CD4-positive, alpha-beta memory T cell (primary cell): ENCODE measurements at regions of chr1 and their contacts with region 1.

Region 1: GRCh38 chr1:203216274-203217138 is 13.0 kb downstream of the CHIT1 start:
- DNase-seq: peak; percentile 48 to 56 (median 50)
- H3K4me3 ChIP-seq: no peak overlapping the region
- H3K4me3 Mint-ChIP-seq: peak overlapping the region in 1 of 8 donors; percentile 18
- H3K27ac ChIP-seq: no peak overlapping the region
- H3K27ac Mint-ChIP-seq: peak overlapping the region in 2 of 7 donors; percentile 54 to 60
- H3K4me1 ChIP-seq: no peaks in the 10 kb centered on the region
- H3K4me1 Mint-ChIP-seq: peaks cover 0 to 9% (median 5%) of the 10 kb centered on the region in 4 donors
- H3K27me3 ChIP-seq: no peaks in the 10 kb centered on the region
- H3K27me3 Mint-ChIP-seq: peaks cover 8 to 10% of the 10 kb centered on the region in 2 donors

Region 2: DNA sequence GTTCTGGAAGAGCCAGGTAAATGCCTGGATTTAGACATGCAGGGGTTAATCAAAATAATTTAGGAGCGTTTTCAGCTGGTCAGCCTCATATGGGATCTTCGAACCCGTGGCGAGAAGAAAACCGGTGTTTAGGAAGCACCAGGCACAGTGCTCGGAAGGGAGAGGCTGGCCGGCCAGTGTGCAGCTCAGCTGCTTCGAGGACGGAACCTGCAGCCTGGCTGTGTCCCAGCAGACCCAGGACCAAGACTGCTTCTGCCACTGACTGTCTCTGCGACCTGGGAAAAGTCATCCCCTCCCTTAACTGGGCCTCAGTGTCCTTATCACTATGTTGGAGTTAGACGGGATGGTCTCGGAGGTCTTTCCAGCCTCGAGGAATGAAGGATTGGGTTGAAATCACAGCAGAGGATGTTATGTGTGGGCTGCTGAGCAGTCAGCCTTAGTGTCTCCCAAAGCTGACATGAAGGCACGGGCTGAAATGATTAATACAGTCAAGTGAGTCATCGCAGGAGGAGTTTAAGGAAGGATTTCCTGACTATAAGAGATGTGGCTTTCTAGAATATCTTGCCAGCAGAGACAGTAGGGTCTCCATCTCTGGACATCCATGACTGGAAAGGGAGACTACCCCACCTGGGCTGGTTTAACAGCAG is 169.4 kb before region 1 on chr1:
- CTCF ChIA-PET with region 1: interaction called, 89 read pairs
- POLR2A ChIA-PET with region 1: no interaction called
- intact Hi-C with region 1: no loop called
- DNase-seq: no peak
- H3K4me3 ChIP-seq: no peak overlapping the region
- H3K4me3 Mint-ChIP-seq: peak overlapping the region in 1 of 8 donors; percentile 32
- H3K27ac ChIP-seq: no peak overlapping the region
- H3K27ac Mint-ChIP-seq: no peak overlapping the region
- H3K4me1 ChIP-seq: no peaks in the 10 kb centered on the region
- H3K4me1 Mint-ChIP-seq: no peaks in the 10 kb centered on the region
- H3K27me3 ChIP-seq: no peaks in the 10 kb centered on the region
- H3K27me3 Mint-ChIP-seq: peaks cover 4 to 19% of the 10 kb centered on the region in 2 donors

Region 3: GRCh38 chr1:203199816-203200571 is 16.5 kb before region 1 on chr1:
- CTCF ChIA-PET with region 1: interaction called, 11 read pairs
- POLR2A ChIA-PET with region 1: no interaction called
- intact Hi-C with region 1: no loop called
- DNase-seq: no peak
- H3K4me3 ChIP-seq: no peak overlapping the region
- H3K4me3 Mint-ChIP-seq: no peak overlapping the region
- H3K27ac ChIP-seq: no peak overlapping the region
- H3K27ac Mint-ChIP-seq: no peak overlapping the region
- H3K4me1 ChIP-seq: no peaks in the 10 kb centered on the region
- H3K4me1 Mint-ChIP-seq: no peaks in the 10 kb centered on the region
- H3K27me3 ChIP-seq: no peaks in the 10 kb centered on the region
- H3K27me3 Mint-ChIP-seq: peaks cover 21 to 32% of the 10 kb centered on the region in 2 donors

Region 4: GRCh38 chr1:203290261-203291089 is 74.0 kb after region 1 on chr1:
- CTCF ChIA-PET with region 1: no interaction called
- POLR2A ChIA-PET with region 1: no interaction called
- intact Hi-C with region 1: no loop called
- DNase-seq: peak; percentile 96 to 98 (median 97)
- H3K4me3 ChIP-seq: peak overlapping the region; percentile 11 to 65
- H3K4me3 Mint-ChIP-seq: peak overlapping the region; percentile 75 to 89 (median 84)
- H3K27ac ChIP-seq: peak overlapping the region; percentile 97
- H3K27ac Mint-ChIP-seq: peak overlapping the region; percentile 98 to 100 (median 100)
- H3K4me1 ChIP-seq: peaks cover 61% of the 10 kb centered on the region
- H3K4me1 Mint-ChIP-seq: peaks cover 48 to 69% (median 58%) of the 10 kb centered on the region in 4 donors
- H3K27me3 ChIP-seq: no peaks in the 10 kb centered on the region
- H3K27me3 Mint-ChIP-seq: no peaks in the 10 kb centered on the region